Adrenal gland (tissue), 19 donors: ENCODE measurements at regions of chr3 and their contacts with region 1.

Region 1: GRCh38 chr3:111967651-111968274 is 11.1 kb upstream of the ABHD10 start:
- DNase-seq: peak; percentile 69 to 95 (median 88)
- H3K4me3 ChIP-seq: no peak overlapping the region
- H3K27ac ChIP-seq: peak overlapping the region in 2 of 5 donors; percentile 0 to 43
- H3K4me1 ChIP-seq: peaks cover 0 to 9% of the 10 kb centered on the region in 2 donors
- H3K27me3 ChIP-seq: no peaks in the 10 kb centered on the region
- CTCF ChIP-seq: peak; percentile 79 to 95 (median 92)
- POLR2A ChIP-seq: no peak

Region 2: DNA sequence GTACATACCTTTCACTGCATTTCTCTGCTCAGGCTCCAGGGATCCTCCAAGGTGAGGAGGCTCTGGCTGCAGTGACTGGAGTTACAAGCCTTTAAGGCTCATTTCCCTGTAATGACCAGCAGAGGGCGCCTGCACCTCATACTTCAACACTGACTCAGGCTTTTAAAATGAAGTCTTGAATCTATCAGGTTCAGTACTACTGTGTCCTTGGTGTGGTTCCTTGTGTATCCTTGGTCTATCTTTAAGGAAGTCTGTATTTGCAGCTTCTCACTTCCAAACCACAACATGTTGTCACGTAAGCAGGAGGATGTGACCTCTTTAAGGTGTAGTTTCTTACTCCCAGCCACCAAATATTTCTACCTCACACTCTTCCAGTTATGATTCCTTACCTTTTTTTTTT is 250.2 kb before region 1 on chr3:
- intact Hi-C with region 1: loop called (anchors 2 to 5 kb)
- DNase-seq: peak; percentile 62 to 96 (median 81)
- H3K4me3 ChIP-seq: no peak overlapping the region
- H3K27ac ChIP-seq: no peak overlapping the region
- H3K4me1 ChIP-seq: no peaks in the 10 kb centered on the region
- H3K27me3 ChIP-seq: no peaks in the 10 kb centered on the region
- CTCF ChIP-seq: peak; percentile 91 to 98 (median 97)
- POLR2A ChIP-seq: no peak

Region 3: GRCh38 chr3:111737706-111738086 is 230.1 kb before region 1 on chr3:
- intact Hi-C with region 1: no loop called
- DNase-seq: peak; percentile 53 to 86 (median 67)
- H3K4me3 ChIP-seq: no peak overlapping the region
- H3K27ac ChIP-seq: peak overlapping the region; percentile 16 to 84 (median 75)
- H3K4me1 ChIP-seq: peaks cover 17 to 43% of the 10 kb centered on the region in 2 donors
- H3K27me3 ChIP-seq: no peaks in the 10 kb centered on the region
- CTCF ChIP-seq: no peak
- POLR2A ChIP-seq: peak in 1 of 2 donors; percentile 32